WTC11 (cell line): ENCODE measurements at regions of chr10 and their contacts with region 1.

Region 1: GRCh38 chr10:80599424-80599847 is 61.7 kb downstream of the SH2D4B start:
- DNase-seq: peak; percentile 78
- ATAC-seq: peak; percentile 93
- H3K4me3 Mint-ChIP-seq: no peak overlapping the region
- H3K27ac Mint-ChIP-seq: no peak overlapping the region
- H3K4me1 Mint-ChIP-seq: 0 out of 2 replicates have a peak, but pooled peaks cover 5% of the 10 kb centered on the region
- H3K27me3 Mint-ChIP-seq: no peaks in the 10 kb centered on the region
- CTCF ChIP-seq: peak; percentile 83

Region 2: GRCh38 chr10:80205478-80206276 is 393.8 kb before region 1 on chr10 and contains the start of gene ANXA11:
- CTCF ChIA-PET with region 1: no interaction called
- POLR2A ChIA-PET with region 1: no interaction called
- DNase-seq: peak; percentile 83
- ATAC-seq: peak; percentile 74
- H3K4me3 Mint-ChIP-seq: peak within 1 kb of the TSS; percentile 86
- H3K27ac Mint-ChIP-seq: peak within 1 kb of the TSS; percentile 94
- H3K4me1 Mint-ChIP-seq: peaks cover 60% of the 10 kb centered on the region
- H3K27me3 Mint-ChIP-seq: peaks cover 13% of the 10 kb centered on the region
- CTCF ChIP-seq: no peak
- total RNA-seq, gene ANXA11: 67.5 to 83.3 TPM (median 80.1 TPM) in 3 replicates

Region 3: DNA sequence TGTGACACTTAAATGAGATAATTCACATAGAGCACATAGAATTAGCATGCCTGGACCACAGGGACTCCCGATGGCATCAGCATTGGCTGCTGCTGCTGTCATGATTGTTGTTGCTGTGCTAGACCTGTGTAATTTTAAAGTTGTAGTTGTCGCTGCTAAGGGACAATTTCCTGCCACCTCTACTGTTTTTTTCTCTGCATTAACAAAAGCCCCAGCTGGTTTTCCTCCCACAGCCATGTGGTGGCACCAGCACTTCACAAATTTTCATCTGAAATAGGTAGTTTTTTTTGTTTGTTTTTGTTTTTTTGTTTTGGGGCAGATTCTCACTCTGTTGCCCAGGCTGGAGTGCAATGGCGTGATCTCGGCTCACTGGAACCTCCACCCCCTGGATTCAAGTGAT is 216.4 kb before region 1 on chr10:
- CTCF ChIA-PET with region 1: interaction called, 15 read pairs
- POLR2A ChIA-PET with region 1: no interaction called
- DNase-seq: peak; percentile 44
- ATAC-seq: peak; percentile 56
- H3K4me3 Mint-ChIP-seq: no peak overlapping the region
- H3K27ac Mint-ChIP-seq: 0 out of 2 replicates have a peak overlapping the region, but pooled peaks have one; percentile 12
- H3K4me1 Mint-ChIP-seq: peaks cover 5% of the 10 kb centered on the region; the same call in 1 of the 2 replicates
- H3K27me3 Mint-ChIP-seq: no peaks in the 10 kb centered on the region
- CTCF ChIP-seq: no peak; the same call in 1 of the 2 replicates

Region 4: GRCh38 chr10:80444646-80445319 is 154.7 kb before region 1 on chr10:
- CTCF ChIA-PET with region 1: interaction called, 14 read pairs
- POLR2A ChIA-PET with region 1: no interaction called
- DNase-seq: peak; percentile 50
- ATAC-seq: peak; percentile 89
- H3K4me3 Mint-ChIP-seq: no peak overlapping the region
- H3K27ac Mint-ChIP-seq: no peak overlapping the region
- H3K4me1 Mint-ChIP-seq: peaks cover 19% of the 10 kb centered on the region
- H3K27me3 Mint-ChIP-seq: no peaks in the 10 kb centered on the region
- CTCF ChIP-seq: no peak

Region 5: GRCh38 chr10:80512031-80512526 is 87.4 kb before region 1 on chr10:
- CTCF ChIA-PET with region 1: interaction called, 12 read pairs
- POLR2A ChIA-PET with region 1: no interaction called
- DNase-seq: no peak
- ATAC-seq: no peak
- H3K4me3 Mint-ChIP-seq: no peak overlapping the region
- H3K27ac Mint-ChIP-seq: no peak overlapping the region
- H3K4me1 Mint-ChIP-seq: no peaks in the 10 kb centered on the region
- H3K27me3 Mint-ChIP-seq: no peaks in the 10 kb centered on the region
- CTCF ChIP-seq: no peak

Region 6: DNA sequence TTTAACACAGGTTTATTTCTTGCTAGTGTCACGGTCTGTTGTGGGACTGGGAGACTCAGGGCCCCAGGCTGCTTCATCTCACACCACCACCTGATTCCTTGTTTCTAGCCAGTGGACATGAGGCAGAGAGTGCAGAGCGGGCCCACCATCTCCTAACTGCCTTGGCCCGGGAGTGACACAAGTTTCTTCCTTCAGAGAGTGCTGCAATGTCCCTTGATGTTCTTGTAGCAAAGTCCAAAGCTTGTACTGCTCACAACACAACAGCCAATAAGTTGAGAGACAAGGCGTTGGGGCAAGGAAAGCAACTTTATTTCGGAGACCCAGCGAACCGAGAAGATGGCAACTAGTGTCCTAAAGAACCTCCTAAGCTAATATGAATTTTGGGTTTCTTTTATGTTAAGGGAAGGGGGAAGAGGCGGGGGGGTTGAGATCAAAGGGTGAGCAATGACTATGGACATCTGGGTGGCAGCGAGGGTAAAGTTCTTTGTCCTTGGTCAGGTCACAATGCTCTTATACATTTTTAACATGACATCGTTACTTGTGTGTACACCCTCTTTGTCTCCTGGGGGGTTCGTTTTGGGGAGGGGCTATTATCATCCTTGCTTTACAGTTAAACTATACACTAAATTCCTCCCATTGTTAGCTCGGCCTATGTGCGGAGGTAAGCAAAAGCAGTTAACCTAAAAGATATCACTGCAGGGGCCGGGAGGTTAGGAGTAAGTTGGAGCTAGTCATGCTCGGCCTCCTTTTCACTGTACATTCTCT is 30.1 kb before region 1 on chr10:
- CTCF ChIA-PET with region 1: interaction called, 12 read pairs
- POLR2A ChIA-PET with region 1: no interaction called
- DNase-seq: no peak
- ATAC-seq: no peak
- H3K4me3 Mint-ChIP-seq: no peak overlapping the region
- H3K27ac Mint-ChIP-seq: no peak overlapping the region
- H3K4me1 Mint-ChIP-seq: no peaks in the 10 kb centered on the region
- H3K27me3 Mint-ChIP-seq: no peaks in the 10 kb centered on the region; the same call in 1 of the 2 replicates
- CTCF ChIP-seq: no peak

Region 7: DNA sequence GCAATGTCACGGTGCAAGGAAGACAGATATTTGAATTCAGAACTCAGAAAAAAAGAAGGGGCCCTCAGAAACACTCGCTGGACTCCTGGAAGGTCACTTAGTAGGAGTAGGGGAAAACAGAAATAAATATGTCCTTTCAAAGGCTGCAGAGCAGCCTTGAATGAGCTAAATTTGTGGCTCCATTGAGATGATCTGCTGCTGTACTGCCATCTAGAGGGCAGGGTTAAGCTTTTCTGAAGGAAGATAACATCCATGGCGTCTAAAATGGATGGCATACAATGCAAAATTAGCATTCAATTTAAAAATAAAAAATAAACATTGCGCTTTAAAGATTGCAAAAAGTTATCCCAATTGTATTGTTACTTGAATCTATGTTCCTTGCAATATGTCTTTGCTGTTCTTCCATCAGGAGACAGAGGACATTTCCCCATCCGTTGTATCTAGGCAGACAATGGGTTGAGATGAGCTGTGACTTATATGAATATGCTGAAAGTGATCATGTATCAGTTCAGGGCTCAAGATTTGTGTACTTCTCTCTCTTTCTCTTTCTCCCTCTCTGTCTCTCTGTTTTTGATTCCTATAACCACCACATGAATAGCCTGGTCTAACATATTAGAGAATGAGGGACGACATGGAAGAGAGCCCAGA is 580.5 kb after region 1 on chr10:
- CTCF ChIA-PET with region 1: interaction called, 10 read pairs
- POLR2A ChIA-PET with region 1: no interaction called
- DNase-seq: peak; percentile 18
- ATAC-seq: peak; percentile 91
- H3K4me3 Mint-ChIP-seq: no peak overlapping the region
- H3K27ac Mint-ChIP-seq: peak overlapping the region; percentile 37
- H3K4me1 Mint-ChIP-seq: peaks cover 10% of the 10 kb centered on the region
- H3K27me3 Mint-ChIP-seq: no peaks in the 10 kb centered on the region
- CTCF ChIP-seq: no peak